Dendritic cell treated with granulocyte-macrophage colony-stimulating factor and Interleukin-4, amounts not matched to agents 40 ng/mL and 50 ng/mL, for 4 days (primary cell): ENCODE measurements at regions of chr14 and their contacts with region 1.

Region 1: GRCh38 chr14:77457522-77458290 is at the starts of genes AHSA1 and VIPAS39:
- H3K4me3 Mint-ChIP-seq: peak within 1 kb of the TSS; percentile 100
- H3K27ac Mint-ChIP-seq: peak within 1 kb of the TSS; percentile 98
- H3K4me1 Mint-ChIP-seq: peaks cover 23% of the 10 kb centered on the region
- H3K27me3 Mint-ChIP-seq: no peaks in the 10 kb centered on the region

Region 2: GRCh38 chr14:77376771-77377501 is 80.8 kb before region 1 on chr14 and contains the starts of genes SAMD15 and TMED8:
- intact Hi-C with region 1: loop called (anchors 1 kb)
- H3K4me3 Mint-ChIP-seq: no peak within 1 kb of the TSS
- H3K27ac Mint-ChIP-seq: no peak within 1 kb of the TSS
- H3K4me1 Mint-ChIP-seq: peaks cover 44% of the 10 kb centered on the region
- H3K27me3 Mint-ChIP-seq: no peaks in the 10 kb centered on the region

Region 3: DNA sequence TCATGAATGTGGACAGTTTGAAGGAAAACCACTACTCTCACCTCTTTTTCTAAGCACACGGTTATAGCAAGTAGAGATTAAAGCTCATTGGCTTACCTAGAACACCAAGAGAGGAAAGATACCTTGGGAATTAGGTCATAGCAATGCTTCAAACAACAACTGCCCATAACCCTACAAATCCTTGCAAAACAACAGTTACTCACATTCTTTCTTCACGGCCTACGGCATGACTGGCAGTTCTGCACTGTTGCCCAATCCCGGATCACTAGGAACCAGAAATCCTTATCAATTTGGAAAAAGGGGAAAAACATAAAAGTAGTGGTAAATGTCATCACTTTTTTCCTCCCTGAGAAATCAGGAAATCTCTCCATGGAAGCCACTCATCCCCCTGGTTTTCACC is 50.5 kb after region 1 on chr14:
- intact Hi-C with region 1: no loop called
- H3K4me3 Mint-ChIP-seq: no peak overlapping the region
- H3K27ac Mint-ChIP-seq: no peak overlapping the region
- H3K4me1 Mint-ChIP-seq: no peaks in the 10 kb centered on the region
- H3K27me3 Mint-ChIP-seq: no peaks in the 10 kb centered on the region

Region 4: DNA sequence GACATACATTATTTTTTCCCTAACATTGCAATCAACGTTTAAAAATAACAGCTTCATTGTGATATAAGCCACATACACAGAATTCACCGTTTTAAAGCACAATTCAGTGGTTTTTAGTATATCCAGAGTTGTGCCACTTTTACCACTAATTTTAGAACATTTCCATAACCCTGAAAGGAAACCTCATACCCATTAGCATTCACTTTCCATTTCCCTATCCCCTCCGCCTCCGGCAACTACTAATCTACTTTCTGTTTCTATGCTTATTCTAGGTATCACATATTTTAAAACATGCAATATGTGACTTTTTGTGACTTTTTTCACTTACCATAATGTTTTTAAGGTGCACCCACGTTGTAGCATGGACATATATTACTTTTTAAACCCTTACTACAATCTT is 96.5 kb after region 1 on chr14:
- intact Hi-C with region 1: loop called (anchors 1 kb)
- H3K4me3 Mint-ChIP-seq: no peak overlapping the region
- H3K27ac Mint-ChIP-seq: no peak overlapping the region
- H3K4me1 Mint-ChIP-seq: no peaks in the 10 kb centered on the region
- H3K27me3 Mint-ChIP-seq: no peaks in the 10 kb centered on the region

Region 5: GRCh38 chr14:77707724-77708408 is 250.2 kb after region 1 on chr14 and contains the starts of genes ALKBH1 and SLIRP:
- intact Hi-C with region 1: loop called (anchors 1 kb)
- H3K4me3 Mint-ChIP-seq: peak within 1 kb of the TSS; percentile 82
- H3K27ac Mint-ChIP-seq: peak within 1 kb of the TSS; percentile 80
- H3K4me1 Mint-ChIP-seq: peaks cover 29% of the 10 kb centered on the region
- H3K27me3 Mint-ChIP-seq: no peaks in the 10 kb centered on the region